CD8-positive, alpha-beta T cell (primary cell): ENCODE measurements at regions of chr12 and their contacts with region 1.

Region 1: GRCh38 chr12:103548622-103549601 is 38.2 kb upstream of the STAB2 start:
- DNase-seq: peak; percentile 37 to 81 (median 70)
- ATAC-seq: peak; percentile 44
- H3K4me3 ChIP-seq: no peak overlapping the region
- H3K4me3 Mint-ChIP-seq: no peak overlapping the region
- H3K27ac ChIP-seq: no peak overlapping the region
- H3K27ac Mint-ChIP-seq: no peak overlapping the region
- H3K4me1 ChIP-seq: no peaks in the 10 kb centered on the region
- H3K4me1 Mint-ChIP-seq: peaks cover 4% of the 10 kb centered on the region
- H3K27me3 ChIP-seq: no peaks in the 10 kb centered on the region
- H3K27me3 Mint-ChIP-seq: peaks cover 15% of the 10 kb centered on the region
- CTCF ChIP-seq: peak; percentile 95

Region 2: GRCh38 chr12:101982307-101982706 is 1566.6 kb before region 1 on chr12:
- CTCF ChIA-PET with region 1: no interaction called
- POLR2A ChIA-PET with region 1: no interaction called
- intact Hi-C with region 1: no loop called
- DNase-seq: no peak
- ATAC-seq: no peak
- H3K4me3 ChIP-seq: no peak overlapping the region
- H3K4me3 Mint-ChIP-seq: no peak overlapping the region
- H3K27ac ChIP-seq: no peak overlapping the region
- H3K27ac Mint-ChIP-seq: no peak overlapping the region
- H3K4me1 ChIP-seq: no peaks in the 10 kb centered on the region
- H3K4me1 Mint-ChIP-seq: no peaks in the 10 kb centered on the region
- H3K27me3 ChIP-seq: no peaks in the 10 kb centered on the region
- H3K27me3 Mint-ChIP-seq: no peaks in the 10 kb centered on the region
- CTCF ChIP-seq: no peak

Region 3: GRCh38 chr12:102095675-102096263 is 1453.1 kb before region 1 on chr12:
- CTCF ChIA-PET with region 1: interaction called, 3 read pairs
- POLR2A ChIA-PET with region 1: no interaction called
- intact Hi-C with region 1: loop called in 1 of 2 experiments (anchors 2 kb)
- DNase-seq: peak in 2 of 9 experiments; percentile 9 to 16
- ATAC-seq: no peak
- H3K4me3 ChIP-seq: no peak overlapping the region
- H3K4me3 Mint-ChIP-seq: no peak overlapping the region
- H3K27ac ChIP-seq: no peak overlapping the region
- H3K27ac Mint-ChIP-seq: no peak overlapping the region
- H3K4me1 ChIP-seq: no peaks in the 10 kb centered on the region
- H3K4me1 Mint-ChIP-seq: no peaks in the 10 kb centered on the region
- H3K27me3 ChIP-seq: no peaks in the 10 kb centered on the region
- H3K27me3 Mint-ChIP-seq: no peaks in the 10 kb centered on the region
- CTCF ChIP-seq: peak; percentile 32

Region 4: DNA sequence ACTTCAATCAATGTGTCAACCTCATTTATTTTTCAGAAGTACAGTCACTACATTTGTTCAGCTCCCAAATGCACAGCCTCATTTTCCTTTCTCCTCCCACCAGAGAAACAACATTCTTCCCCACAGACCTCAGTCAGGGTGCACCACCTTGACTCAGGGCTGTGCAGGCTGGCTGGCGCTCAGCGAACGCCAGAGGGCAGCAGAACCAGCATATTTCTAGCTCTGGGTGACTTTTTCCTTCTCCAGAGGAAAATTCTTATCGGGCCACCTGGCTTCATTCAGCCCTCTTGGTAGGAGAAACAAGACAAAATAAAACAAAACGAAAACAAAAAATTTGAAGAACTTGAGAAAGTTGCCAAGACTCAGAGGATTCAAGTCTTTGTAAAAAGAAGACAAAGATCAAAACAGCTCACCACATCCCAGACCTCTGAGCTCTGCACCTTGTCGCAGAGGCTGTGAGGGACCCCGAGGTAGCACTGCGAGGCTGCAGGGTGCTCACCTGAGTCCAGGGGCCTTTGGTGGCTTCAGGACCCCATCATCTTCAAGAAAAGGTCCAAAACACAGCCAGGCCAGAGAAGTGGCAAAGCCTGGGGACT is 665.6 kb before region 1 on chr12:
- CTCF ChIA-PET with region 1: interaction called, 58 read pairs
- POLR2A ChIA-PET with region 1: no interaction called
- intact Hi-C with region 1: loop called (anchors 1 kb)
- DNase-seq: peak in 6 of 9 experiments; percentile 9 to 52 (median 34)
- ATAC-seq: no peak
- H3K4me3 ChIP-seq: no peak overlapping the region
- H3K4me3 Mint-ChIP-seq: no peak overlapping the region
- H3K27ac ChIP-seq: no peak overlapping the region
- H3K27ac Mint-ChIP-seq: no peak overlapping the region
- H3K4me1 ChIP-seq: no peaks in the 10 kb centered on the region
- H3K4me1 Mint-ChIP-seq: no peaks in the 10 kb centered on the region
- H3K27me3 ChIP-seq: no peaks in the 10 kb centered on the region
- H3K27me3 Mint-ChIP-seq: peaks cover 21% of the 10 kb centered on the region
- CTCF ChIP-seq: peak; percentile 61

Region 5: GRCh38 chr12:102973583-102973982 is 575.3 kb before region 1 on chr12:
- CTCF ChIA-PET with region 1: no interaction called
- POLR2A ChIA-PET with region 1: no interaction called
- intact Hi-C with region 1: no loop called
- DNase-seq: no peak
- ATAC-seq: no peak
- H3K4me3 ChIP-seq: no peak overlapping the region
- H3K4me3 Mint-ChIP-seq: no peak overlapping the region
- H3K27ac ChIP-seq: no peak overlapping the region
- H3K27ac Mint-ChIP-seq: no peak overlapping the region
- H3K4me1 ChIP-seq: no peaks in the 10 kb centered on the region
- H3K4me1 Mint-ChIP-seq: no peaks in the 10 kb centered on the region
- H3K27me3 ChIP-seq: no peaks in the 10 kb centered on the region
- H3K27me3 Mint-ChIP-seq: peaks cover 36% of the 10 kb centered on the region
- CTCF ChIP-seq: no peak

Region 6: DNA sequence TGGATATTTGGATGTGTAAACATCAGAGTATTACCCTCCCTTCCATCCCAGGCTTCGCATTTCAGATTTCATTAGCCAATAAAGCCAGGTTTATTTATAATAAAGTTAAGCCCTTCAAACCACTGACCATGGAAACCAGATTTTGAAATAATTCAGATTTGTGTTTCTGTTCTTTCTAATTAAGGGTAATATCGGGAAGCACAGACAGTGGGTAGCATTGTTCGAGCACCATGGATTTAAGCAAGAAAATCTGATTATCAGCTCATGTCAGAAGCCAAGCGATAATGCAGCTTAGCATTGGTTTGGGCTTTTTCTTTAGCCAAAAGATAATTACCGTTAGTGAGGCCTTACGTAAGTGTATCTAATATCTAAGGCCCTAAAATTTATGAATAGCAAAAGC is 169.2 kb before region 1 on chr12:
- CTCF ChIA-PET with region 1: no interaction called
- POLR2A ChIA-PET with region 1: no interaction called
- intact Hi-C with region 1: no loop called
- DNase-seq: no peak
- ATAC-seq: no peak
- H3K4me3 ChIP-seq: no peak overlapping the region
- H3K4me3 Mint-ChIP-seq: no peak overlapping the region
- H3K27ac ChIP-seq: no peak overlapping the region
- H3K27ac Mint-ChIP-seq: no peak overlapping the region
- H3K4me1 ChIP-seq: no peaks in the 10 kb centered on the region
- H3K4me1 Mint-ChIP-seq: peaks cover 6% of the 10 kb centered on the region
- H3K27me3 ChIP-seq: no peaks in the 10 kb centered on the region
- H3K27me3 Mint-ChIP-seq: no peaks in the 10 kb centered on the region
- CTCF ChIP-seq: no peak

Region 7: DNA sequence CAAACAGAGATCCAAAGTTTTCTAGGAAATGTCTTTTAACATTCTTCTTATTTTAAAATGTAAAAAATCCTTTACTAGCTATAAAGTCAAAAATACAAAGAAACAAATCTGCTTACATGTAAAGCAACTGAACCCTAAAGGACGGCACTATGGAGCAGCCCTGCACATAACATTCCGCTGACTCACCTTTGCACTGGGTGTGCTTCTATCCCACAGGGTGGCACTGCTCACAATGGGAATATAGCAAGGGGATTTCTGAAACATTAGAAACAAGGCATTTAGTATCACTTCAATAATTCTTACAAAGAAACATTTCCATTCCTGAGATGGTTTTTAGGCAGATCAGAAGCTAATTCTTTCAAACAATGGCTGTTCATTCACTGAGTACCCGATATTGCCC is 147.5 kb before region 1 on chr12:
- CTCF ChIA-PET with region 1: no interaction called
- POLR2A ChIA-PET with region 1: no interaction called
- intact Hi-C with region 1: loop called in 1 of 2 experiments (anchors 5 kb)
- DNase-seq: peak in 2 of 9 experiments; percentile 12 to 32
- ATAC-seq: no peak
- H3K4me3 ChIP-seq: no peak overlapping the region
- H3K4me3 Mint-ChIP-seq: no peak overlapping the region
- H3K27ac ChIP-seq: no peak overlapping the region
- H3K27ac Mint-ChIP-seq: no peak overlapping the region
- H3K4me1 ChIP-seq: no peaks in the 10 kb centered on the region
- H3K4me1 Mint-ChIP-seq: peaks cover 2% of the 10 kb centered on the region
- H3K27me3 ChIP-seq: no peaks in the 10 kb centered on the region
- H3K27me3 Mint-ChIP-seq: no peaks in the 10 kb centered on the region
- CTCF ChIP-seq: no peak

Region 8: GRCh38 chr12:103503977-103504376 is 44.9 kb before region 1 on chr12:
- CTCF ChIA-PET with region 1: interaction called, 20 read pairs
- POLR2A ChIA-PET with region 1: no interaction called
- intact Hi-C with region 1: loop called in 1 of 2 experiments (anchors 1 kb)
- DNase-seq: peak; percentile 39 to 78 (median 65)
- ATAC-seq: peak; percentile 73
- H3K4me3 ChIP-seq: no peak overlapping the region
- H3K4me3 Mint-ChIP-seq: no peak overlapping the region
- H3K27ac ChIP-seq: no peak overlapping the region
- H3K27ac Mint-ChIP-seq: no peak overlapping the region
- H3K4me1 ChIP-seq: no peaks in the 10 kb centered on the region
- H3K4me1 Mint-ChIP-seq: peaks cover 4% of the 10 kb centered on the region
- H3K27me3 ChIP-seq: no peaks in the 10 kb centered on the region
- H3K27me3 Mint-ChIP-seq: no peaks in the 10 kb centered on the region
- CTCF ChIP-seq: peak; percentile 61

Region 9: GRCh38 chr12:103538397-103538796 is 10.5 kb before region 1 on chr12:
- CTCF ChIA-PET with region 1: interaction called, 25 read pairs
- POLR2A ChIA-PET with region 1: interaction called, 3 read pairs
- intact Hi-C with region 1: no loop called
- DNase-seq: no peak
- ATAC-seq: no peak
- H3K4me3 ChIP-seq: no peak overlapping the region
- H3K4me3 Mint-ChIP-seq: no peak overlapping the region
- H3K27ac ChIP-seq: no peak overlapping the region
- H3K27ac Mint-ChIP-seq: no peak overlapping the region
- H3K4me1 ChIP-seq: no peaks in the 10 kb centered on the region
- H3K4me1 Mint-ChIP-seq: peaks cover 2% of the 10 kb centered on the region
- H3K27me3 ChIP-seq: no peaks in the 10 kb centered on the region
- H3K27me3 Mint-ChIP-seq: no peaks in the 10 kb centered on the region
- CTCF ChIP-seq: no peak